Body of pancreas (tissue), 4 donors: ENCODE measurements at regions of chr6 and their contacts with region 1.

Region 1: DNA sequence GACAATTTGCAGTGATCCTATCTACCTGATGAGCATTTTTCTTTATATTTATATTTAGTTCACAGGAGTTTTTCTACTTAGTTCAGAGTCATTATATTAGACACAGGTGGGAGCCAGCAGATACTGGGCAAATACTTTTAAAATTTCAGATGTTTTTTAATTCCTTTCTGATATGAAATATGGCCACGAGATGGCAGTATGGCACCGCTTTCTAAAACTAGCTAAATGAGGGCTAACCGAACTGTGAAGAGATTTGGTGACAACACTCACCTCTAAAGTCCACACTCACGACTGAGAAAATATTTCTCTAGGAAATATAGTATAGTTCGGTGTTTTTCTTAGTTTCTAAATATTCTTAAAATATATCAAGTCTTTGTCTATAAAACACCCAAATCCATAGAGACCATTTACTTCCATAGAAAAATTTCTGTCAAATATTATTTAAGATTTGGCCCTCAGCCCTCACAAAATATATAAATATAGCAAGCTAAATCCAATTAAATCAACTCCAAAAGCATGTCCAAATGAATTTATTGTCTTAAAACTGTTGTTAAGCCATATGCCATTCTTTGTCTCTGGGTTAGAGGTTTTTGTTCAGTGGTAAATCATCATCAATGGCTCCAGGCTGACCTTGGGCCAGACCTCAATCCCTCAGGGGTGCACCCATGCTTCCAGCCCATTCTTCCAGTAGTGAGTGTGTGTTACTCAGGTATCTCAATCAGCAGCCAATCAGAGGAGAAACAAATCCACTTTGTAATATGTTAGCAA is 63.6 kb downstream of the HUS1B start:
- DNase-seq: peak; percentile 47 to 61 (median 56)
- ATAC-seq: peak; percentile 48
- H3K4me3 ChIP-seq: no peak overlapping the region
- H3K27ac ChIP-seq: no peak overlapping the region
- H3K4me1 ChIP-seq: no peaks in the 10 kb centered on the region
- H3K27me3 ChIP-seq: no peaks in the 10 kb centered on the region
- CTCF ChIP-seq: peak; percentile 54 to 78 (median 64)
- POLR2A ChIP-seq: no peak

Region 2: DNA sequence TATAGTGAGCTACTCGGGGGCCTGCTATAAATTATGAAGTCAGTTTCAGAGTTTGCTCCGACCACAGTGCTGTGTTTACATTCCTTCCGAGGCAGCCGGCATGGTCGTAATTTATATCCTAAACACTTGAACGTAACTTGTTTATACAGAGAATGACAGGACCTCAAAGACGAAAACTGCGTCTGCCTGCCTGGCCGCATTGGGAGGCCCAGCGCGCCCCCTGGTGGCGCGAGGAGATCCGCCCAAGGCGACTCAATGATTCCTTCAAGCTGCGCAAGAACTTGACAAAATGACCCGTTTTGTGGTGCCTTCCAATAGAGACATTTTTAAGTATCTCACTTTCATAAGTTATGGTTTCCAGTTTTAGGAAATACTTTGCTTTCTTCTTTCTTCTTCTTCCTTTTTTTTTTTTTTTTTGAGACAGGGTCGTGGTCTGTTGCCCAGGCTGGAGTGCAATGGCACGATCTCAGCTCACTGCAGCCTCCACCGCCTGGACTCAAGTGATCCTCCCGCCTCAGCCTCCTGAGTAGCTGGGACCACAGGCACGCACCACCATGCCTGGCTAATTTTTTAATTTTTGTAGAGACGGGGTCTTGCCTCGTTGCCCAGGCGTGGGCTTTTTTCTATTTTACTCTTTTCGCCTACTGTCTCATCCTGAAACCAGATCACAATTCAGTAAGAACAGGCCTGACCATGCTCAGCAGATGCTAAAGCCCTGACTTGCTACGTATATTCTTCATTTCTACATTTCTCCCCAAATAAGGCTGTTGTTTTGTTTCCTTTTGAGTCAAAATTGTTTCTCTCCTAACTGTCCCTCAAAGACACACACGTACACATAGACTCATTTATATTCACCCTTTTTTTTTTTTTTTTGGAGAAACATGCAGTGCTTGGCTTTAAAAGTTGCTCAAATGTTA is 803.9 kb after region 1 on chr6:
- intact Hi-C with region 1: loop called (anchors 10 kb)
- DNase-seq: peak; percentile 62 to 75 (median 64)
- ATAC-seq: peak; percentile 45
- H3K4me3 ChIP-seq: no peak overlapping the region
- H3K27ac ChIP-seq: no peak overlapping the region
- H3K4me1 ChIP-seq: peaks cover 15% of the 10 kb centered on the region
- H3K27me3 ChIP-seq: peaks cover 0 to 16% of the 10 kb centered on the region in 2 donors
- CTCF ChIP-seq: peak; percentile 72 to 98 (median 78)
- POLR2A ChIP-seq: no peak